Posterior cingulate gyrus (tissue), 11 donors: ENCODE measurements at regions of chr2 and their contacts with region 1.

Region 1: DNA sequence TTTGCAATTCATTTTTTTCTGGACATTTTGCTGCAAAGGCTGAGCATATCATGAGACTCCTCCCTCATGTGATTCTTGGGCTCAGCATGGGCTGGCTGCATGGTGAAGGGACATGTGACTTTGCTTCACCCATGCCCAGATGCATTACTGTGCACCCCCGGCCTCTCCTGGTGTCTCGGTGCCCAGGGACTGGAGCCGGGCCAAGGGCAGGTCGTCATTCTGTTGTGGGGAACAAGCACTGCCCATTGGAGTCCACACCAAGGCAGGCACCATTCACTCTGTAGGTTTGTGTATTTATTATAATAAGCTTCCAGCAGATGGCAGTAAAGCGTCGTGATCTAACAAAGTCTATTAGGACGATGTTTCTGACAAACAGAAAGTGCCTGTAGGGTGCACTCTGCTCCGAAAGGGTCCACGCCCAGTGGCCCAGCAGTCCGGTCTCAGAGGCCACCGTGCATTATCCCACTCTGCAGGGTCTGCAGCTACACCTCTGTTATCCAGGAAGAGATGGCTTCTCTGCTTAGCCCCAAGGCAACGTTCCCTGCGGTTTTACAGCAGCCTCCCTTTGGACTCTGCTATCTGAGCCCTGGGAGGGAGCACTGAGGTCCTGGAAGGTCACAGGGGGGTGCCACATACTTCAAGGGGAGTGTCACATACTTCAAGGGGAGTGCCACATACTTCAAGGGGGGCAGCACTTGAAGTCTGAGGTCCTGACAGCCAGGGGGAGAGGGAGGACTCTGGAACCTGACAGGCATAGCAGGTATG is 219.6 kb downstream of the TSN start:
- DNase-seq: peak in 8 of 10 donors; percentile 17 to 87 (median 38)

Region 2: GRCh38 chr2:121810959-121811853 is 163.9 kb before region 1 on chr2:
- intact Hi-C with region 1: loop called (anchors 5 kb)
- DNase-seq: peak; percentile 41 to 96 (median 71)

Region 3: DNA sequence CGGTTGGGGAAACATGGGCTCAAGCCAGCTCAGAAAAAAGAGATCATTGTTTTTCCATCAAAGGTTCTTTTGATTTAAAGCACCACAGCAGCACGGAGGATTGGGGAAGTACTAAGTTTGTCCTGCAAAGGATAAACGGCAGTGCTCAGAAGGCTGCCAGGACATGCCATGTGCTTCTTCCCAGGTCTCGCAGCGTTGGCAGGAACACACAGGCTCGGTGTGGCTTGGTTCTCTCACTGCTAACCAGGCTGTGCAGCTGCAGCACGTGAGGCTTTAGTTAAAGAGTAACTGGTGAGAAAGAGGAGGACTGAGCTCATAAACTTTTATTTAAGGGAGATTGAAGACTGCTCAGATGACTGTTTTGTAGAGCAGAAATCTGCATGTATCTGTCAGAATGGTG is 44.6 kb after region 1 on chr2:
- intact Hi-C with region 1: no loop called
- DNase-seq: peak in 6 of 10 donors; percentile 13 to 86 (median 27)

Region 4: DNA sequence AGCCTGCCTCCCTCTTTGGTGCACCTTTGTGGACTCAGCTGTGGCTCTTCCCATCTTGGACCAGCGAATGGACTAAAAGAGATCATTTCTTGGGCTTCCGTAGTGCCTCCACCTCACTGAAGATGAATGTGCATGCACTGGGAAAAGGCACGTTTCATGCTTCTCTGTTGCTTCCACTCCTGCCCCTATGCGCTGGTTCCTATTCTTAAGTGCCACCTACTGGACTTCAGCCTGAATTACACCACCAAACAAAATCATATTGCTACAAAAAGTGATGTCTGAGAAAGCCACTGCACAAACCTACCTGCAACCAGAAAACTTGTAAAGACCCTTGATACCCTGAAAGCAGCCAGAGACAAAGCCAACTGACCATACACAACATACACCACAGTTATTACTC is 476.0 kb after region 1 on chr2:
- intact Hi-C with region 1: loop called (anchors 1 kb)
- DNase-seq: no peak